ENCODE measurements at regions of chr6 and their contacts with region 1.

Region 1: DNA sequence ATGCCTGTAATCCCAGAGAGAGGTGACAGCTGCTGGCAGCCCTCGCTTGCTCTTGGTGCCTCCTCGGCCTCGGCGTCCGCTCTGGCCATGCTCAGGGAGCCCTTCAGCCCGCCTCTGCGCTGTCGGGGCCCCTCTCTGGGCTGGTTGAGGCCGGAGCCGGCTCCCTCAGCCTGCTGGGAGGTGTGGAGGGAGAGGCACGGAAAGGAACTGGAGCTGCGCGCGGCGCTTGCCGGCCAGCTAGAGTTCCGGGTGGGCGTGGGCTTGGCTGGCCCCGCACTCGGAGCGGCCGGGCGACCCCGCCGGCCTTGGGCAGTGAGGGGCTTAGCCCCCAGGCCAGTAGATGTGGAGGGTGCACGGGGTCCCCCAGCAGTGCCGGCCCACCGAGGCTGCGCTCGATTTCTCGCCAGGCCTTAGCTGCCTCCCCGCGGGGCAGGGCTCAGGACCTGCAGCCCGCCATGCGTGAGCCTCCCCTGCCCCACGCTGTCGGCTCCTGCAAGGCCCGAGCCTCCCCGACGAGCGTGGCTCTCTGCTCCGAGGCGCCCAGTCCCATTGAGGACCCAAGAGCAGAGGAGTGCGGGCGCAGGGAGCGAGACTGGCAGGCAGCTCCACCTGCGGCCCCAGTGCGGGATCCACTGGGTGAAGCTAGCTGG is 34.6 kb downstream of the C6orf52 start:
- DNase-seq: no peak
- H3K4me3 Mint-ChIP-seq: no peak overlapping the region
- H3K27ac Mint-ChIP-seq: no peak overlapping the region
- H3K4me1 Mint-ChIP-seq: peaks cover 16% of the 10 kb centered on the region
- H3K27me3 Mint-ChIP-seq: peaks cover 19% of the 10 kb centered on the region

Region 2: DNA sequence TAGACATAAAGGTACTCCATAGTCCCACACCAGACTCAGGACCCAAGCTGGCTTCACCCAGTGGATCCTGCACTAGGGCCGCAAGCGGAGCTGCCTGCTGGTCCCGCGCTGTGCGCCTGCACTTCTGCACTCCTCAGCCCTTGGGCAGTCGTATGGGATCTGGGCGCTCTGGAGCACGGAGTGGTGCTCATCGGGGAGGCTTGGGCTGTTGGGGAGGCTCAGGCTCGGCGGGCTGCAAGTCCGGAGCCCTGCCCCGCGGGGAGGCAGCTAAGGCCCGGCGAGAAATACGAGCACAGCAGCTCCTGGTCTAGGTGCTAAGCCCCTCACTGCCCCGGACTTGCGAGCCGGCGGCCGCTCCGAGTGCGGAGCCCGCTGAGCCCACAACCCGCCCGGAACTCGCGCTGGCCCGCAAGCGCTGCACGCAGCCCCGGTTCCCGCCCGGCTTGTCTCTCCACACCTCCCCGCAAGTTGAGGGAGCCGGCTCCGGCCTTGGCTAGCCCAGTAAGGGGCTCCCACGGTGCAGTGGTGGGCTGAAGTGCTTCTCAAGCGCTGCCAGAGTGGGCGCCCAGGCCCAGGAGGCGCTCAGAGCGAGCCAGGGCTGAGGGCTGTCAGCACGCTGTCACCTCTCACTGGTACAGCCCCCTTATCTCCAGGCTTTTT is 172.0 kb before region 1 on chr6:
- intact Hi-C with region 1: loop called (anchors 10 kb)
- DNase-seq: no peak
- H3K4me3 Mint-ChIP-seq: no peak overlapping the region
- H3K27ac Mint-ChIP-seq: no peak overlapping the region
- H3K4me1 Mint-ChIP-seq: no peaks in the 10 kb centered on the region
- H3K27me3 Mint-ChIP-seq: peaks cover 3% of the 10 kb centered on the region

Region 3: DNA sequence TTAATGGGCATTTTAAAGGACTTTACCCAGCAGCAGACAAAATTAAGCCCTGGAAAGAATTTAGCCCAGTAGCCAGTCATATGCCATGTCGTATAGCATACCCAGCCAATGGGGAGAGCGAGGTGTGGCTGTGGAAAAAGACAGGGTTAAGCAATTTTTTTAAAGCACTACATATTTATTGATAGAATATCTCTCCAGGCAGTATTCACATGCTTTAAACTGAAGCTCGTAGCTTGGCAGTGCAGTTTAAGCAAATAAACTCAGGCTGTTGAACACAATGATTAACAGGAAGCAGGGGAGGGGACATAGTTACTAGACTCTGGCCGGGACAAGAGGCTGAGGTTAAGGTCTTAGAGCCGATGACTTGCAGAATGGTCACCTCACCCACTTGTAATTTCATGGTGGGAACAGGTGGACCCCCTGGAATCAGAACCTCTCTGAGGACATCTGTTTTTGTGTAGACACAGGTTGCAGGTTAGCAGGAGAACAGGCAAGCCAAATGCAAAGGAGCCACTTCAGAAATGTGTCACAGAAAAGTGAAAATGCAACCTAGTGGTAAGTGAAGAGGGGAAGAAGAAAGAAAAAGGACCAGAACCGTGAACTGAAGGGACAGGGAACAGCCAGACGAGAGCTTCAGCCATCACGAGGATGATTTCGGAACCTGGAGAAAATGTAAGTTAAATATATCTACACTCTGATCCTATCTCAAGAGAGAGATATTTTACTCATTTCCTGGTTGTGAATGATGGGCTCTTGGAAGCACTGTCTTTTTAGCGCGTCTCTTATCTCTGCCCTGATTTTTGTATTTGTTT is 131.4 kb before region 1 on chr6:
- intact Hi-C with region 1: loop called (anchors 5 kb)
- DNase-seq: peak; percentile 81
- H3K4me3 Mint-ChIP-seq: peak overlapping the region; percentile 92
- H3K27ac Mint-ChIP-seq: peak overlapping the region; percentile 89
- H3K4me1 Mint-ChIP-seq: peaks cover 48% of the 10 kb centered on the region
- H3K27me3 Mint-ChIP-seq: no peaks in the 10 kb centered on the region

Measured in activated CD4-positive, alpha-beta T cell treated with anti-CD3 and anti-CD28 coated beads, Interleukin-2, amount 10 ng/mL, durations not matched to agents 24 days and 14 days (primary cell).